ENCODE measurements at regions of chr20 and their contacts with region 1.

Region 1: DNA sequence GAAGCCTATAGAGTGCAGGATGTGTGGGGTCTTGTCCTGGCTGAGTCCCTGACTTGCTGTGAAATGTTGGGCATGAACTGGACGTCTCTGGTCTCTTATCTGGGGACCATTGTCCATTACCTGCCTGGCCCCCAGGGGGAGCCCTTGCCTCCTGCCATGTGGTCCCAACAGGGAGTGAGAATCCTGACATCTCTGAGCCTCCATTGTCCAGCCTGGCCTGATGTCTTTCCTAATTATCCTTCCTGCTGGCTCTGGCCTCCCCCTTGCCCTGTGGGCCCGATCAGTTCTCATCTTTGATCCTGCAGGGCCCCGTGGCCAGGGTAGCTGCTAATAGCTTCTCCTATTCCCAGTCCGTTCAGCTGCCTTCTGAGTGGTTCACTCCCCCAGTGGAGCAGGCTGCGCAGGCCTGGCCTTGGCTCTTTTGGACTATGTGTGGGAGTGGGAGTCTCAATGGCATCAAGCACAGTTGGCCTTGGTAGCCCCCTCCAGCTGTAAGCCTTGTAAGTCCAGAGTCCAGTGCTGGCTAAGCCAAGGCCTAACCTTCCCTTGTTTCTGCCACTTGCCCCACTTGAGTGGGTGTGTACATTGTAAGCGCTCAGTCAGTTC is 77.9 kb upstream of the RALY start:
- DNase-seq: peak; percentile 73
- ATAC-seq: peak; percentile 54
- H3K4me3 Mint-ChIP-seq: no peak overlapping the region
- H3K27ac Mint-ChIP-seq: no peak overlapping the region
- H3K4me1 Mint-ChIP-seq: peaks cover 19% of the 10 kb centered on the region
- H3K27me3 Mint-ChIP-seq: no peaks in the 10 kb centered on the region
- CTCF ChIP-seq: peak; percentile 80

Region 2: DNA sequence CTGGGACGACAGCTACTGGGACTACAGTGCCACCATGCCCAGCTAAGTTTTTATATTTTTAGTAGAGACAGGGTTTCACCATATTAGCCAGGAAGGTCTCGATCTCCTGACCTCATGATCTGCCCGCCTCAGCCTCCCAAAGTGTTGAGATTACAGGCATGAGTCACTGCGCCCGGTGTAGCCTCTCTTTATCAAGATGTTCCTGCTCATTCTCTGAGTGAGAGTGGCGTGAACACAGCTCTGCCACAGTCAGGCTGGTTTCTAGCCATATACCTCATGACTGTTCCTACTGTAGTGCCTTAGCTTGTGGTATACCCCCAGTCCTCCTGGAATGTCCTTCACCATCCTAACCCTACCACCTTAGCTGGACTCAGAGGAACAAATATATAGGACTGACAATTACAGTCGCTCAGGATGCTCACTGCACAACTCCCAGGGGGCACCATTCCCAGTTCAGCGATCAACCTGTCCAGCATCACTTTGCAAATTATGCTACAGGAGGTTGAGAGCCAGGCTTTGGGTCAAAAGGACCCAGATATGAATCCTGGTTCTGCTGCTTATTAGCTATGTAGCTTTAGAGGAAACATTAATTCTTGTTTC is 18.4 kb before region 1 on chr20:
- CTCF ChIA-PET with region 1: interaction called, 14 read pairs
- POLR2A ChIA-PET with region 1: interaction called, 4 read pairs
- intact Hi-C with region 1: no loop called
- DNase-seq: peak; percentile 18
- ATAC-seq: no peak
- H3K4me3 Mint-ChIP-seq: no peak overlapping the region
- H3K27ac Mint-ChIP-seq: no peak overlapping the region
- H3K4me1 Mint-ChIP-seq: no peaks in the 10 kb centered on the region
- H3K27me3 Mint-ChIP-seq: peaks cover 12% of the 10 kb centered on the region
- CTCF ChIP-seq: no peak

Region 3: DNA sequence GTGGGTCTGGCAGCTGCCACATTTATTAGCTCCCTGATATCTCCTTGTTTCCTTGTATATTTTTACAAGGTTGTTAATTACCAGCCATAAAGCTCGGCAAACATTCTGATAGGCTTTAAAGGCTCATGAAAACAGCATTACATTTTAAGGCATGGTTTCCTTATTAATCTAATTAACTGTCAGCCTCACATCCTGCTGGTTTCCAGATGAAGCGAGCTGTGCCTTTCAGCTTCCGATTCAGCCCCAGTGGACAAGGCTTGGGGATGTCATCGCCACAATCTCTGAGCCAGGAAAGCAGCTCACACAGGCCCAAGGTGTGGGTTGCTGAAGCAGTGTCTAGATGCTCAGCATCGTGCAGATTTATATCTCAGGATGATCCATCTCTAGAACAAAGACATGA is 11.9 kb after region 1 on chr20:
- CTCF ChIA-PET with region 1: interaction called, 23 read pairs
- POLR2A ChIA-PET with region 1: interaction called, 3 read pairs
- intact Hi-C with region 1: no loop called
- DNase-seq: no peak
- ATAC-seq: no peak
- H3K4me3 Mint-ChIP-seq: no peak overlapping the region
- H3K27ac Mint-ChIP-seq: no peak overlapping the region
- H3K4me1 Mint-ChIP-seq: no peaks in the 10 kb centered on the region
- H3K27me3 Mint-ChIP-seq: no peaks in the 10 kb centered on the region
- CTCF ChIP-seq: no peak

Region 4: GRCh38 chr20:33933469-33933909 is 17.7 kb after region 1 on chr20:
- CTCF ChIA-PET with region 1: interaction called, 23 read pairs
- POLR2A ChIA-PET with region 1: interaction called, 3 read pairs
- intact Hi-C with region 1: no loop called
- DNase-seq: peak; percentile 78
- ATAC-seq: peak; percentile 95
- H3K4me3 Mint-ChIP-seq: no peak overlapping the region
- H3K27ac Mint-ChIP-seq: no peak overlapping the region
- H3K4me1 Mint-ChIP-seq: no peaks in the 10 kb centered on the region
- H3K27me3 Mint-ChIP-seq: no peaks in the 10 kb centered on the region
- CTCF ChIP-seq: peak; percentile 23

Region 5: GRCh38 chr20:33964441-33964840 is 48.6 kb after region 1 on chr20:
- CTCF ChIA-PET with region 1: no interaction called
- POLR2A ChIA-PET with region 1: no interaction called
- intact Hi-C with region 1: no loop called
- DNase-seq: no peak
- ATAC-seq: no peak
- H3K4me3 Mint-ChIP-seq: no peak overlapping the region
- H3K27ac Mint-ChIP-seq: no peak overlapping the region
- H3K4me1 Mint-ChIP-seq: no peaks in the 10 kb centered on the region
- H3K27me3 Mint-ChIP-seq: no peaks in the 10 kb centered on the region
- CTCF ChIP-seq: no peak

Region 6: DNA sequence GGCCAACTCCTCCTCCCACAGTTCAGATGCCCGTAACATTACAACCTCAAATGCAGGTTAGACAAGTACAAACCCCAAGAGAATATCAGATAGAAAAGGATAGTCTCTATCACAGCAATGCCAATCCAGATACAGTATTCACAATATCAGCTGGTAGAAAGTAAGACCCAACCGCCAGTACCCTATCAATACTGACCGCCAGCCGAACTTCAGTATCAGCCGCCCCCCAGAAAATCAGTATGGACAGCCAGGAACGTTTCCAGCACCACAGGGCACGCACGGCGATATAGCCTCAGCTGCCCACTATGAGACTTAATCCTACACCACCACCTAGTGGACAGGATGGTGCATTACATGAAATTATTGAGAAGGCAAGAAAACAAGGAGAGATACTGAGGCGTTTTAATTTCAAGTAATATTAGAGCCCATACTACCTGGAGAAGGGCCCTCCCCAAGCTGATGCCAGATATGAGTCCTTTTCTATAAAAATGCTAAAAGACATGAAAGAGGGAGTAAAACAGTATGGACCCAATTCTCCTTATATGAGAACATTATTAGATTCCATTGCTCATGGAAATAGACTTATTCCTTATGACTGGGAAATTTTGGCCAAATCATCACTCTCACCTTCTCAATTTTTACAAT is 213.8 kb after region 1 on chr20:
- CTCF ChIA-PET with region 1: interaction called, 33 read pairs
- POLR2A ChIA-PET with region 1: no interaction called
- intact Hi-C with region 1: loop called (anchors 10 kb)
- DNase-seq: peak; percentile 68
- ATAC-seq: peak; percentile 98
- H3K4me3 Mint-ChIP-seq: no peak overlapping the region
- H3K27ac Mint-ChIP-seq: no peak overlapping the region
- H3K4me1 Mint-ChIP-seq: peaks cover 10% of the 10 kb centered on the region
- H3K27me3 Mint-ChIP-seq: peaks cover 5% of the 10 kb centered on the region
- CTCF ChIP-seq: peak; percentile 93